ENCODE measurements at regions of chr2 and their contacts with region 1.

Region 1: GRCh38 chr2:121095257-121096080 is 189.5 kb downstream of the TFCP2L1 start:
- DNase-seq: peak; percentile 79
- ATAC-seq: peak; percentile 88
- H3K4me3 Mint-ChIP-seq: no peak overlapping the region
- H3K27ac Mint-ChIP-seq: no peak overlapping the region
- H3K4me1 Mint-ChIP-seq: no peaks in the 10 kb centered on the region
- H3K27me3 Mint-ChIP-seq: peaks cover 13% of the 10 kb centered on the region
- CTCF ChIP-seq: peak; percentile 64

Region 2: DNA sequence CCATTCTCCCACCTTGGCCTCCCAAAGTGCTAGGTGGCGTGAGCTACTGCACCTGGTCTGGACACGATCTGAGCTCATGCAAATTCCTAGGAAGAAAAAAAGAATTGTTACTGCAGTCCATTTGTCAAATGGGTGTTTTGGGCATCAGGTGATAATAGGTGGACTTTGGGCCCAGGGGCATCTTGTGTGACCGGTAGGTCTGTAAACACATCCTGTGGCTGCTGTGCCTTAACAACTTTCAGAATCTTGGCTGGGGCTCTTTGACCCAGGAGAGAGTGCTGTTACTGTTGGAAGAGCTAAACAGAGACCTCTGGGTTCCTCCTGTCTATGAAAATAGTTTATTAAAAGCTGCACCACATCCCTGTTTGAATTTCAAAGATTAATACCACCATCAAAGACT is 224.5 kb after region 1 on chr2:
- CTCF ChIA-PET with region 1: interaction called, 15 read pairs
- POLR2A ChIA-PET with region 1: no interaction called
- DNase-seq: no peak
- ATAC-seq: no peak
- H3K4me3 Mint-ChIP-seq: no peak overlapping the region
- H3K27ac Mint-ChIP-seq: no peak overlapping the region
- H3K4me1 Mint-ChIP-seq: no peaks in the 10 kb centered on the region
- H3K27me3 Mint-ChIP-seq: no peaks in the 10 kb centered on the region
- CTCF ChIP-seq: no peak

Region 3: DNA sequence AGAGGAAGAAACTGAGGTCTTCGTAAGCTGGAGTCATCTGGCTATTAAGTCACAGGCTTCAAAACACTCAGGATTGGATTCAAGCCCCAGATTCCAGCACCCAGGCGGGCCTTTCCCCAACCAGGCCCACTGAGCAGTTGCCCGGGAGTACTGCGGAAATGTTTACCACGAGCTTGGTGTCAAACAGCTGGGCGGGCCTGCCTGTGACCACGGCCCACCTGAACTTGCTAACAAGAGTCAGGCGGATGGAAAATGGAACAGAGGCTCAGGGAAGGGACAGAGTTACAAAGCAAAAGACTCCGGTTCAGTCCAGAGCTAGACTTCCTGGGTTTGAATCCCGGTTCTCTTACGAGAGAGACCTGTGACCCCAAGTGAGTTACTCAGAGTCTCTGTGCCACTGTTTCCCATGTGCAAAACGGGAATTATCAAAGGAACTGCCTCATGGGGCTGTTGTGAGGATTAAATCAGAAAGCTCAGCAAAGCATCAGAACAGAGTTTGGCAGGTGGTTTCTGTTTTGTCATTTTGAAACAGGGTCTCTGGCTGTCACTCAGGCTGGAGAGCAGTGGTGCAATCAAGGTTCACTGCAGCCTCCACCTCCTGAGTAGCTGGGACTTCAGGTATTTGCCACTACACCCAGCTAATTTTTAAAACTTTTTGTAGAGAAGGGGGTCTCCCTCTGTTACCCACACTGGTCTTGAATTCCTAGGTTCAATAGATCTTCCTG is 238.5 kb after region 1 on chr2:
- CTCF ChIA-PET with region 1: interaction called, 16 read pairs
- POLR2A ChIA-PET with region 1: no interaction called
- DNase-seq: no peak
- ATAC-seq: no peak
- H3K4me3 Mint-ChIP-seq: no peak overlapping the region
- H3K27ac Mint-ChIP-seq: no peak overlapping the region
- H3K4me1 Mint-ChIP-seq: peaks cover 22% of the 10 kb centered on the region
- H3K27me3 Mint-ChIP-seq: no peaks in the 10 kb centered on the region
- CTCF ChIP-seq: no peak